ENCODE measurements at regions of chr9 and their contacts with region 1.

Region 1: GRCh38 chr9:113581865-113582697 is 118.6 kb downstream of the RGS3 start:
- DNase-seq: peak; percentile 90
- ATAC-seq: peak; percentile 84 to 85
- H3K4me3 ChIP-seq: peak overlapping the region; percentile 46
- H3K27ac ChIP-seq: peak overlapping the region; percentile 85
- H3K4me1 ChIP-seq: peaks cover 96% of the 10 kb centered on the region
- H3K27me3 ChIP-seq: no peaks in the 10 kb centered on the region
- CTCF ChIP-seq: peak; percentile 56

Region 2: DNA sequence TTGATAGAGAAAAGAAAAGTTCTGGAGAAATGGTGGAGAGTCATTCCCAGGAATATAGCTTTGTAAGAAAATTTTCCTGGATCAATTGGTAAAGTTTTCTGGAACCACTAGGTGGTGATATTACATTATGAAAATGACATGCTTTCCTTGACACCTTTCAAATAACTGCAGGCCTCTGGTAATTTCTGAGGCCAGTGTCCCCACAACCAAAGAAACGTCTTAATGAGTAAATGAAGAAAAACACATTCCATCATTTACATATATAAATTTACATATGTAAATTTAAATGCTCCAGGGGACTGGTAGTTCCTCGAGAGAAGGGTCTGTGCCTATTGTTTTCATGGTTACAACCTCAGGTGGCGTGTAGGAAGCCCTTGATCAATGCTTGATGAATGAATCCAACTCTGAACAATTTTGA is 135.7 kb before region 1 on chr9:
- intact Hi-C with region 1: loop called (anchors 10 kb)
- DNase-seq: no peak
- ATAC-seq: peak; percentile 47 to 59
- H3K4me3 ChIP-seq: no peak overlapping the region
- H3K27ac ChIP-seq: peak overlapping the region; percentile 28
- H3K4me1 ChIP-seq: peaks cover 4% of the 10 kb centered on the region
- H3K27me3 ChIP-seq: no peaks in the 10 kb centered on the region
- CTCF ChIP-seq: peak; percentile 77

Measured in lower lobe of right lung (tissue), 2 donors.